Sigmoid colon (tissue), 7 donors: ENCODE measurements at regions of chr3 and their contacts with region 1.

Region 1: DNA sequence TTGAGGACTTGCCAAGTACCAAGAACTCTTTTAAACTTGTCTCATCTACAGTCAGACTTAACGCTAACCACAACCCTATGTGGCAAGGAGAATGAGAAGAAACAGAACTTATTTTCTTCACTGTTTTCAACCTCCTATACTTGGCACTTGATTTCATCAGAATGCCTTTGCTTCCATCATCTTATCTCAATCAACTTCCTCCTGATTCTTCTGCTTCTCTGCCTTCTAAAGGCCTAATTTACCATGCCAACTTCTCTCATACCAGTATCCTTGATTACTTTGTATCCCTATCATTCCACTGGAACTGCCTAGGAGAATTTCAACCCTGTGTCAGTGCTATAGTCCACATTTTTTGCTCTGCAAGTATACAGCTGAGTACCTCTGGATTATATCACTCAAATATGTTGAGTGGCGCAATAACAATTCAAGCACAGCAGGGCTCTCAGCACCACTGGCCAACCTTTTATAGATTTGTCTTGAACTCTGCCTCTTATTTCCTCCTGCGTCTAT is 413.6 kb downstream of the ROBO1 start:
- DNase-seq: no peak
- H3K4me3 ChIP-seq: no peak overlapping the region
- H3K27ac ChIP-seq: peak overlapping the region in 3 of 4 donors; percentile 63 to 69 (median 68)
- H3K4me1 ChIP-seq: peaks cover 0 to 47% (median 24%) of the 10 kb centered on the region in 4 donors
- H3K27me3 ChIP-seq: no peaks in the 10 kb centered on the region
- CTCF ChIP-seq: no peak
- EP300 ChIP-seq: peak in 3 of 4 donors; percentile 2 to 64 (median 60)
- POLR2A ChIP-seq: no peak

Region 2: GRCh38 chr3:79167651-79168416 is 186.4 kb before region 1 on chr3:
- intact Hi-C with region 1: loop called (anchors 10 kb)
- DNase-seq: peak; percentile 64
- H3K4me3 ChIP-seq: no peak overlapping the region
- H3K27ac ChIP-seq: peak overlapping the region in 2 of 4 donors; percentile 14 to 54
- H3K4me1 ChIP-seq: peaks cover 0 to 19% (median 14%) of the 10 kb centered on the region in 4 donors
- H3K27me3 ChIP-seq: no peaks in the 10 kb centered on the region
- CTCF ChIP-seq: no peak
- EP300 ChIP-seq: no peak
- POLR2A ChIP-seq: no peak

Region 3: DNA sequence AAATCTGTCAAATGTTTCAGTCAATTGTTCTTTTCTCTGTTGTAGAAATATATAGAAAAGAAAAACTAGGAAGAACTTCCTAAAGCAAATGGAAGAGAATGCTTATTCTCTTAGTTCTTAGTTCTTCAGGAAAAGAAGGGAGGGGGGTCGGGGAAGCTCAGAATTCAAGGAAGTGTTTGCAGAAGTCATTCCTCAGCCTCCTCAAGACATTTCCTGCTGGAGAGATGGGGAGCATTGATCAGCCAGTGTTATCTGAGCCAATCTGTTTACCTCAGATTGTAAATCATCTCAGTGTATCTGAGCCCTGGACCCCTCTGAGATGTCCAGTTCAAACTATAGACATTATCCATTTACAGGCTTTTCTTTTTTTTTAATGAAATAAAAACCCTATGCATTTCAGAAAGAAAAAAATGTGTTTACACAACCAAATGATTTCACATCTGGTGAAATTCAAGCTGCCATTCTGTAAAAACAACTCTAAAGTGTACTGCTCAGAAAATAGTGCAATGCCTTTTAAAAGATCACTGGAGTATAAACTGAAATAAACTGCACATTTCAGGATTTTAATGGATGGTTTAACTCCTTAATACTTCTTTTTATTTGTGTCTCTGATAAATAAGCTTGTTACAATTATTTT is 47.2 kb before region 1 on chr3:
- intact Hi-C with region 1: loop called (anchors 10 kb)
- DNase-seq: no peak
- H3K4me3 ChIP-seq: no peak overlapping the region
- H3K27ac ChIP-seq: peak overlapping the region in 1 of 4 donors; percentile 15
- H3K4me1 ChIP-seq: peaks cover 0 to 18% (median 4%) of the 10 kb centered on the region in 4 donors
- H3K27me3 ChIP-seq: no peaks in the 10 kb centered on the region
- CTCF ChIP-seq: no peak
- EP300 ChIP-seq: no peak
- POLR2A ChIP-seq: no peak